ENCODE measurements at regions of chr19 and their contacts with region 1.

Region 1: GRCh38 chr19:40433391-40434216 is 7.8 kb upstream of the SERTAD1 start:
- DNase-seq: no peak
- ATAC-seq: peak; percentile 92
- H3K4me3 ChIP-seq: peak overlapping the region; percentile 74
- H3K27ac ChIP-seq: peak overlapping the region; percentile 82
- H3K4me1 ChIP-seq: peaks cover 20% of the 10 kb centered on the region
- H3K27me3 ChIP-seq: no peaks in the 10 kb centered on the region
- CTCF ChIP-seq: no peak
- EP300 ChIP-seq: peak in 1 of 2 experiments; percentile 24; a peak in 1 of 4 replicates
- POLR2A ChIP-seq: no peak
- RAD21 ChIP-seq: no peak

Region 2: DNA sequence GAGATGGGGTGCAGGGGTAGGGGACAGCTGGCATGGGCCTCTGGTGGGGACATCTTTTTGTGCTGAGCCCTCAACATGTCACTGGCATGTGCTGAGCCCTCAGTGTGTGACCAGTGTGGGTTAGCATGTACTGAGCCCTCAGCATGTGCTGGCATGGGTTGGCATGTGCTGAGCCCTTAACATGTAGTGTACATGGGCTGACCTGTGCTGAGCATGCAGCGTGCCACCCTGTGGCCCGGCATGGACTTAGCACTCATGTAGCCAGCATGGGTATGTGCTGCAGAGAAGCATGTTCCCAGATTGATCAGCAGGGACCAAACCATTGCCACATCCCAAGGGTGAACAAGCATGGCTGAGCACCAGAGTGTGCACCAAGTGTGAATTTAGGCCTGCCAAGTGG is 55.1 kb before region 1 on chr19:
- CTCF ChIA-PET with region 1: no interaction called
- POLR2A ChIA-PET with region 1: no interaction called
- RAD21 ChIA-PET with region 1: no interaction called
- SMC1A ChIA-PET with region 1: no interaction called
- in situ Hi-C with region 1: no loop called
- intact Hi-C with region 1: no loop called
- DNase-seq: no peak
- ATAC-seq: peak; percentile 73
- H3K4me3 ChIP-seq: no peak overlapping the region
- H3K27ac ChIP-seq: no peak overlapping the region
- H3K4me1 ChIP-seq: no peaks in the 10 kb centered on the region
- H3K27me3 ChIP-seq: no peaks in the 10 kb centered on the region
- CTCF ChIP-seq: peak in 1 of 3 experiments; percentile 18; a peak in 2 of 6 replicates
- EP300 ChIP-seq: no peak
- POLR2A ChIP-seq: no peak
- RAD21 ChIP-seq: no peak

Region 3: DNA sequence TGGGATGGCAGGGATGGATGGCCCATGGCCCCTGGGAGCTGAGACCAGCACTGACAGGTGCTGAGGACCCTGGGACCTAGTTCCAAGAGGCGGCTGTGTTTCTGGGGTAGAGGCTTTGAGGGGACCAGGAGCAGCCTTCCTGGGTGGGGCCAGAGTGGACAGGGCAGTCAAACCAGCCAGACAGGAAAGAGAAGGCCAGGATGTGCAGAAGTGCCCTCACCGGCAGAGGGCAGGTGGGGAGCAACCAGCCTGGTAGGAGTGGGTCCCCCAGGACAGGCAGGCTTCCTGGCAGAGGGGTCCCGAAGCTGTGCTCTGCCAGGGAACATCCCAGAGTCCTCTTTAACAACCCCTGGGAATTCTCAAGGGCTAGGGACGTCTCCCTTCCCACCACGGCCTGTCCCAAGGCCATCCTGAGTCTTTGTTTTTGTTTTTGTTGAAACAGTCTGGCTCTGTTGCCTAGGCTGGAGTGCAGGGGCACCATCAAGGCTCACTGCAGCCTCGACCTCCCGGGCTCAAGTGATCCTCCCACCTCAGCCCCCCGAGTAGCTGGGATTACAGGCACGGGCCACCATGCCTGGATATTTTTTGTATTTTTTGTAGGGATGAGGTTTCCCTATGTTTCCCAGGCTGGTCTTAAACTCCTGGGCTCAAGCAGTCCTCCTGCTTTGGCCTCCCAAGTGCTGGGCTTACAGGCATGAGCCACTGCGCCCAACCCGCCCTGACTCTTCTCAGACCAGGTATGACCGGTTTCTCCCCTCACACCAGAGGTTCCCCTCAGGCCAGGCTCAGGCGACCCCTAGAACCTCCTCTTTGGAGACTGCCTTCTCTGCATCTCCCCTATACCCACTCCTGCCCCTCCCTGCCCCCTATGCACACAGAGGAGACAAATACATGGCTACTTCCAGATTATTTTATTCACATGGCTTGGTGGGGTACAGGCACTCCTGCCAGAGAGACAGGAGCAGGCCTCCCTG is 40.4 kb before region 1 on chr19:
- CTCF ChIA-PET with region 1: no interaction called
- POLR2A ChIA-PET with region 1: no interaction called
- RAD21 ChIA-PET with region 1: no interaction called
- SMC1A ChIA-PET with region 1: no interaction called
- in situ Hi-C with region 1: no loop called
- intact Hi-C with region 1: no loop called
- DNase-seq: no peak
- ATAC-seq: peak; percentile 90
- H3K4me3 ChIP-seq: no peak overlapping the region
- H3K27ac ChIP-seq: no peak overlapping the region
- H3K4me1 ChIP-seq: peaks cover under 1% of the 10 kb centered on the region; the same call in 1 of the 2 replicates
- H3K27me3 ChIP-seq: no peaks in the 10 kb centered on the region
- CTCF ChIP-seq: peak; percentile 19 to 67 (median 52); a peak in 5 of 6 replicates
- EP300 ChIP-seq: no peak
- POLR2A ChIP-seq: no peak
- RAD21 ChIP-seq: no peak

Region 4: GRCh38 chr19:40444192-40445028 is 10.8 kb after region 1 on chr19 and contains the start of gene SERTAD3:
- CTCF ChIA-PET with region 1: interaction called, 5 read pairs
- POLR2A ChIA-PET with region 1: interaction called, 49 read pairs
- RAD21 ChIA-PET with region 1: interaction called, 21 read pairs
- SMC1A ChIA-PET with region 1: interaction called, 4 read pairs
- in situ Hi-C with region 1: no loop called
- intact Hi-C with region 1: no loop called
- DNase-seq: peak; percentile 76
- ATAC-seq: peak; percentile 88
- H3K4me3 ChIP-seq: peak within 1 kb of the TSS; percentile 88
- H3K27ac ChIP-seq: peak within 1 kb of the TSS; percentile 94
- H3K4me1 ChIP-seq: peaks cover 5% of the 10 kb centered on the region
- H3K27me3 ChIP-seq: no peaks in the 10 kb centered on the region
- CTCF ChIP-seq: peak; percentile 25 to 60 (median 52); a peak in 4 of 6 replicates
- EP300 ChIP-seq: peak in 1 of 2 experiments; percentile 38; a peak in 1 of 4 replicates
- POLR2A ChIP-seq: peak; percentile 97
- RAD21 ChIP-seq: peak; percentile 65
- polyA plus RNA-seq, gene SERTAD3: 4.2 to 8.4 TPM

Region 5: GRCh38 chr19:40576585-40577451 is 143.2 kb after region 1 on chr19 and contains the start of gene SHKBP1:
- CTCF ChIA-PET with region 1: no interaction called
- POLR2A ChIA-PET with region 1: no interaction called
- RAD21 ChIA-PET with region 1: no interaction called
- SMC1A ChIA-PET with region 1: no interaction called
- in situ Hi-C with region 1: no loop called
- intact Hi-C with region 1: no loop called
- DNase-seq: peak; percentile 86
- ATAC-seq: peak; percentile 100
- H3K4me3 ChIP-seq: peak within 1 kb of the TSS; percentile 99
- H3K27ac ChIP-seq: peak within 1 kb of the TSS; percentile 78
- H3K4me1 ChIP-seq: peaks cover 21% of the 10 kb centered on the region
- H3K27me3 ChIP-seq: no peaks in the 10 kb centered on the region
- CTCF ChIP-seq: no peak
- EP300 ChIP-seq: no peak
- POLR2A ChIP-seq: peak; percentile 84
- RAD21 ChIP-seq: no peak
- polyA plus RNA-seq, gene SHKBP1: 2.3 to 15.1 TPM

Measured in GM12878 (cell line).